ENCODE measurements at regions of chr17 and their contacts with region 1.

Region 1: DNA sequence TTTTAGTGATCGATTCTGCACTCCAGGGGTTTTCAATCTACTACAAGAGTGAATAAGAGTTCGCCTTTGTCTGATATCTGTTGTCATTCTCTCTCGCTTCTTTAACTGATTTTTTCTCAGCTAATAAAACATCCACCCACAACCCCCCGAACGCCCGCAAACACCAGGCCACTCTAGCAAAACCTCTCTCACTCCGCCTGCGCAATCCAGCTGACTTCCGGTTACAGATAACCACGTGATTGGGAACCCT is 338 bp upstream of the RPL19 start:
- DNase-seq: peak; percentile 65
- ATAC-seq: peak; percentile 65
- H3K4me3 Mint-ChIP-seq: peak overlapping the region; percentile 99
- H3K27ac Mint-ChIP-seq: peak overlapping the region; percentile 100
- H3K4me1 Mint-ChIP-seq: peaks cover 69% of the 10 kb centered on the region
- H3K27me3 Mint-ChIP-seq: no peaks in the 10 kb centered on the region
- CTCF ChIP-seq: no peak

Region 2: GRCh38 chr17:38752119-38752929 is 447.4 kb before region 1 on chr17 and contains the start of gene PSMB3:
- CTCF ChIA-PET with region 1: no interaction called
- POLR2A ChIA-PET with region 1: interaction called, 5 read pairs
- intact Hi-C with region 1: loop called (anchors 1 kb)
- DNase-seq: peak; percentile 87
- ATAC-seq: peak; percentile 89
- H3K4me3 Mint-ChIP-seq: peak within 1 kb of the TSS; percentile 98
- H3K27ac Mint-ChIP-seq: peak within 1 kb of the TSS; percentile 93
- H3K4me1 Mint-ChIP-seq: peaks cover 54% of the 10 kb centered on the region
- H3K27me3 Mint-ChIP-seq: peaks cover 25% of the 10 kb centered on the region
- CTCF ChIP-seq: no peak
- total RNA-seq, gene PSMB3: 234 and 250 TPM in 2 replicates

Region 3: GRCh38 chr17:38853292-38854219 is 346.2 kb before region 1 on chr17 and contains the start of gene RPL23:
- CTCF ChIA-PET with region 1: no interaction called
- POLR2A ChIA-PET with region 1: interaction called, 13 read pairs
- intact Hi-C with region 1: no loop called
- DNase-seq: peak; percentile 79
- ATAC-seq: peak; percentile 86
- H3K4me3 Mint-ChIP-seq: peak within 1 kb of the TSS; percentile 99
- H3K27ac Mint-ChIP-seq: peak within 1 kb of the TSS; percentile 100
- H3K4me1 Mint-ChIP-seq: peaks cover 43% of the 10 kb centered on the region
- H3K27me3 Mint-ChIP-seq: no peaks in the 10 kb centered on the region
- CTCF ChIP-seq: no peak
- total RNA-seq, gene RPL23: 2,652 and 3,293 TPM in 2 replicates

Region 4: GRCh38 chr17:39164675-39165143 is 35.0 kb before region 1 on chr17:
- CTCF ChIA-PET with region 1: interaction called, 16 read pairs
- POLR2A ChIA-PET with region 1: interaction called, 29 read pairs
- intact Hi-C with region 1: loop called (anchors 2 kb)
- DNase-seq: peak; percentile 64
- ATAC-seq: peak; percentile 95
- H3K4me3 Mint-ChIP-seq: peak overlapping the region; percentile 89
- H3K27ac Mint-ChIP-seq: no peak overlapping the region
- H3K4me1 Mint-ChIP-seq: peaks cover 23% of the 10 kb centered on the region
- H3K27me3 Mint-ChIP-seq: peaks cover 26% of the 10 kb centered on the region
- CTCF ChIP-seq: no peak

Region 5: GRCh38 chr17:39244600-39245570 is 45.1 kb after region 1 on chr17:
- CTCF ChIA-PET with region 1: interaction called, 177 read pairs
- POLR2A ChIA-PET with region 1: interaction called, 59 read pairs
- intact Hi-C with region 1: no loop called
- DNase-seq: peak; percentile 76
- ATAC-seq: peak; percentile 81
- H3K4me3 Mint-ChIP-seq: peak overlapping the region; percentile 56
- H3K27ac Mint-ChIP-seq: no peak overlapping the region
- H3K4me1 Mint-ChIP-seq: peaks cover 20% of the 10 kb centered on the region
- H3K27me3 Mint-ChIP-seq: peaks cover 3% of the 10 kb centered on the region
- CTCF ChIP-seq: peak; percentile 34

Region 6: DNA sequence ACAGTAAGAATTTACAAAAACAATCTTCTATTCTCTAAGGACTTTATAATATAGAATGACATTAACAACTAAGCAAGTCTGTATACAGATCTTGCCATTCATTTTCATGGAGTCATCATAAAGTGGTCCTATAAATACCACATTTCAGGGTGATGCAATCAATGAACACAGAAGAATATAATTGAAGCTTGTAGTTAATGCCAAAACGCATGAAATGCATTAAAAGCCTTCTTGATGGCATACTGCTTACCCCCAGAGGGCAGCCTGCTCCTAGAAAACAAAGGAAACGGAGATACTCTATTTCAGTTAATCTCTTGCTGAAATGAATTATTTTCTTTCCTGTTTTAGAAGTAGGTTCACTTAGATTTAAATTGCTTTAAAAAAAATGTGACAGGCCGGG is 71.2 kb after region 1 on chr17:
- CTCF ChIA-PET with region 1: no interaction called
- POLR2A ChIA-PET with region 1: no interaction called
- intact Hi-C with region 1: no loop called
- DNase-seq: no peak
- ATAC-seq: no peak
- H3K4me3 Mint-ChIP-seq: no peak overlapping the region
- H3K27ac Mint-ChIP-seq: no peak overlapping the region
- H3K4me1 Mint-ChIP-seq: peaks cover under 1% of the 10 kb centered on the region
- H3K27me3 Mint-ChIP-seq: no peaks in the 10 kb centered on the region
- CTCF ChIP-seq: no peak

Region 7: GRCh38 chr17:39621523-39622379 is 422.0 kb after region 1 on chr17:
- CTCF ChIA-PET with region 1: no interaction called
- POLR2A ChIA-PET with region 1: no interaction called
- intact Hi-C with region 1: loop called (anchors 10 kb)
- DNase-seq: peak; percentile 92
- ATAC-seq: peak; percentile 77
- H3K4me3 Mint-ChIP-seq: peak overlapping the region; percentile 70
- H3K27ac Mint-ChIP-seq: peak overlapping the region; percentile 60
- H3K4me1 Mint-ChIP-seq: peaks cover 26% of the 10 kb centered on the region
- H3K27me3 Mint-ChIP-seq: peaks cover 16% of the 10 kb centered on the region
- CTCF ChIP-seq: peak; percentile 97